Activated naive CD4-positive, alpha-beta T cell treated with anti-CD3 and anti-CD28 coated beads for 36 hours (primary cell): ENCODE measurements at regions of chr4 and their contacts with region 1.

Region 1: GRCh38 chr4:88456757-88457306 is at the start of gene HERC5:
- DNase-seq: peak; percentile 93
- H3K4me3 Mint-ChIP-seq: peak within 1 kb of the TSS; percentile 98
- H3K27ac Mint-ChIP-seq: peak within 1 kb of the TSS; percentile 97
- H3K4me1 Mint-ChIP-seq: peaks cover 5% of the 10 kb centered on the region
- H3K27me3 Mint-ChIP-seq: no peaks in the 10 kb centered on the region
- total RNA-seq, gene HERC5: 38.8 to 39.5 TPM

Region 2: DNA sequence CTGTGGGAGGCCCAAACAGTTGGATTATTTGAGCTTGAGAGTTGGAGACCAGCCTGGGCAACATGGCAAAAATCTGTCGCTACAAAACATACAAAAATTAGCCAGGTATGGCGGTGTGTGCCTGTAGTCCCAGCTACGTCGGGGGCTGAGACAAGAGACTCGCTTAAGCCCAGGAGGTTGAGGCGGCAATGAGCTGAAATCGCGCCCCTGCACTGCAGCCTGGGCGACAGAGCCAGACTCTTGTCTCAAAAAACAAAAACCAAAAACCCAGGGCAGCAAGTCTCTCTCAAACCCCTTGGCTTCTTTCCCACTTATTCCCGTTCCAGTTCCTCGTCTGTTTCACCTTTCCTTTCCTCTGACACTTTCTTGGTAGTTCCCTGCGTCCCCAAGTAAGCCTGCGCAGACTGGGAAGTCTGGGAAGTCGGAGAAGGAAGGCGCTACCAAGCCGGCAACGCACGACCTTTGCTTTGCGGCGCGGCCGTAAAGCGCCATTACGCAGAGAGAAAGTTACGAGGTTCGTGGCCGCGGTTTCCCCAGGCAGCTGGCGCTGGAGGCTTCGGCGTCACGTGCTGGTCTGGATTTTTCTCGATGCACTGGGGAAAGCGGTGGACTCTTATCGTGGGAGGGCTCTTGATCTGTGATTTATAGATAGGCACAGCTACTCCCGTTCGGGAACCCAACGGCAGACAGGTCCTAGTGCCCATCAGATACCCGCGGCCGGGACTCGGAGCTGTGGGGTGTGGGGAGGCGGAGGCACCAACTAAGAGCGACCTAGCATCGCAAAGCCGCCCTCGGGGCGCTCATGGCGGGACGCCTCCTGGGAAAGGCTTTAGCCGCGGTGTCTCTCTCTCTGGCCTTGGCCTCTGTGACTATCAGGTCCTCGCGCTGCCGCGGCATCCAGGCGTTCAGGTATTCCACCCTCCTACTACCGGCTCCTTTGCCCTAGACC is 1034.5 kb before region 1 on chr4 and contains the start of gene NUDT9:
- CTCF ChIA-PET with region 1: no interaction called
- intact Hi-C with region 1: loop called (anchors 5 kb)
- DNase-seq: peak; percentile 91
- H3K4me3 Mint-ChIP-seq: peak within 1 kb of the TSS; percentile 98
- H3K27ac Mint-ChIP-seq: peak within 1 kb of the TSS; percentile 97
- H3K4me1 Mint-ChIP-seq: peaks cover 32% of the 10 kb centered on the region
- H3K27me3 Mint-ChIP-seq: no peaks in the 10 kb centered on the region
- total RNA-seq, gene NUDT9: 12.1 to 13.4 TPM

Region 3: GRCh38 chr4:88489100-88489761 is 32.4 kb after region 1 on chr4:
- CTCF ChIA-PET with region 1: interaction called, 4 read pairs
- intact Hi-C with region 1: loop called (anchors 1 kb)
- DNase-seq: no peak
- H3K4me3 Mint-ChIP-seq: no peak overlapping the region
- H3K27ac Mint-ChIP-seq: peak overlapping the region; percentile 54
- H3K4me1 Mint-ChIP-seq: peaks cover 12% of the 10 kb centered on the region
- H3K27me3 Mint-ChIP-seq: no peaks in the 10 kb centered on the region

Region 4: GRCh38 chr4:88803600-88804096 is 346.8 kb after region 1 on chr4:
- CTCF ChIA-PET with region 1: no interaction called
- intact Hi-C with region 1: loop called (anchors 1 kb)
- DNase-seq: peak; percentile 60
- H3K4me3 Mint-ChIP-seq: no peak overlapping the region
- H3K27ac Mint-ChIP-seq: no peak overlapping the region
- H3K4me1 Mint-ChIP-seq: peaks cover 22% of the 10 kb centered on the region
- H3K27me3 Mint-ChIP-seq: no peaks in the 10 kb centered on the region